Activated CD4-positive, alpha-beta T cell treated with anti-CD3 and anti-CD28 coated beads, Interleukin-2, amount 10 ng/mL, durations not matched to agents 24 days and 14 days (primary cell): ENCODE measurements at regions of chr11 and their contacts with region 1.

Region 1: DNA sequence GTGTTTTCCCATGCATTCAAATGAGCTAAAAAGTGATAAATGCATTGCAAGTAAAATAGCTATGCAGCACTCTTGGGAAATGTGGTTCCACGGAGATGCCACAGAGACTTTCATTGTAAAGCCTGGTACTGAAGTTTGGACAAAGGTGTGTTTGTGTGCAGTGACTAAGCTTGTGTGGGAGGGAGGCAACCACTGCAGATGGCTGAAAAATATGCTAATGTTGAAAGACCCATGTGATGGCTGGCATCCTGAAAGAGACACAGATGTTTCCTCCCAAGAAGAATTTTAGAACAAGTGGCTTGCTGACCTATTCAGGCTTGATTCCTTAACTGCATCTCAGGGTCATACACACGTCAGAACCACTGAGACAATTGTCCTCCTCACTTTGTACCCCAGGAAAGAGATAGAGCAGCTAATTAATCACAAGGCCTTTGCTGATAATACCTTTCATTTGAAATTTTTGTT is 73.8 kb downstream of the FAM76B start:
- DNase-seq: peak; percentile 73
- H3K4me3 Mint-ChIP-seq: peak overlapping the region; percentile 57
- H3K27ac Mint-ChIP-seq: peak overlapping the region; percentile 84
- H3K4me1 Mint-ChIP-seq: peaks cover 45% of the 10 kb centered on the region
- H3K27me3 Mint-ChIP-seq: no peaks in the 10 kb centered on the region

Region 2: GRCh38 chr11:95688580-95689189 is 27.1 kb before region 1 on chr11:
- intact Hi-C with region 1: no loop called
- DNase-seq: peak; percentile 83
- H3K4me3 Mint-ChIP-seq: no peak overlapping the region
- H3K27ac Mint-ChIP-seq: no peak overlapping the region
- H3K4me1 Mint-ChIP-seq: peaks cover 27% of the 10 kb centered on the region
- H3K27me3 Mint-ChIP-seq: no peaks in the 10 kb centered on the region

Region 3: GRCh38 chr11:95705485-95706124 is 10.2 kb before region 1 on chr11:
- intact Hi-C with region 1: loop called (anchors 1 kb)
- DNase-seq: peak; percentile 96
- H3K4me3 Mint-ChIP-seq: no peak overlapping the region
- H3K27ac Mint-ChIP-seq: no peak overlapping the region
- H3K4me1 Mint-ChIP-seq: peaks cover 17% of the 10 kb centered on the region
- H3K27me3 Mint-ChIP-seq: no peaks in the 10 kb centered on the region

Region 4: DNA sequence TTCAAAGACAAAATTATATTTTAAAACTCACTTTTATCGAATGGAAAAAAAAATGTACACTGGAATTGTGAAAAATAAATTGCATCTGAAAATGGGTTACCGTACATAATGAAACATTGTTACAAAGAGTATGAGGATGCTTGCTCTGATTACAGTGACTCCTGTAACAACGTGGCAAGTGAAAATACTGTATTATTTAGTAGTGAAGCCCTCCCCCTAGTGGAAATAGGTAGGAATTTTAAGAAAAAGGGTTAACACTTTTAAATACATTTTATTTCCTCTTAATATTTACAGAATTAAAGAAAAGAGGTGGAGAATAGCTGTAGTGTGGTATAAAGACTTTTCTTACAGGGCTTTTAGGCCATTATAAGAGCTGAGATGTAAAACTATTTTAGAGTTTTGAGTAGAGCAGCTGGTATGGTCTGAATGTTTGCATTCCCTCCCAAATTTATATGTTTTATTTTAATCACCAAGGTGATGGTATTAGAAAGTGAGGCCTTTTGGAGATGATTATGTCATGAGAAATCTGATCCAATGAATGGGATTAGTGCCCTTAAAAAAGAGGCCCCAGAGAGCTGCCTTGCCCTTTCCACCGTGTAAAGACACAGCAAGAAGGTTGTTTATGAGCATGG is 48.6 kb after region 1 on chr11:
- intact Hi-C with region 1: loop called (anchors 2 kb)
- DNase-seq: peak; percentile 66
- H3K4me3 Mint-ChIP-seq: no peak overlapping the region
- H3K27ac Mint-ChIP-seq: no peak overlapping the region
- H3K4me1 Mint-ChIP-seq: peaks cover 6% of the 10 kb centered on the region
- H3K27me3 Mint-ChIP-seq: peaks cover 2% of the 10 kb centered on the region